ENCODE measurements at regions of chr2 and their contacts with region 1.

Region 1: DNA sequence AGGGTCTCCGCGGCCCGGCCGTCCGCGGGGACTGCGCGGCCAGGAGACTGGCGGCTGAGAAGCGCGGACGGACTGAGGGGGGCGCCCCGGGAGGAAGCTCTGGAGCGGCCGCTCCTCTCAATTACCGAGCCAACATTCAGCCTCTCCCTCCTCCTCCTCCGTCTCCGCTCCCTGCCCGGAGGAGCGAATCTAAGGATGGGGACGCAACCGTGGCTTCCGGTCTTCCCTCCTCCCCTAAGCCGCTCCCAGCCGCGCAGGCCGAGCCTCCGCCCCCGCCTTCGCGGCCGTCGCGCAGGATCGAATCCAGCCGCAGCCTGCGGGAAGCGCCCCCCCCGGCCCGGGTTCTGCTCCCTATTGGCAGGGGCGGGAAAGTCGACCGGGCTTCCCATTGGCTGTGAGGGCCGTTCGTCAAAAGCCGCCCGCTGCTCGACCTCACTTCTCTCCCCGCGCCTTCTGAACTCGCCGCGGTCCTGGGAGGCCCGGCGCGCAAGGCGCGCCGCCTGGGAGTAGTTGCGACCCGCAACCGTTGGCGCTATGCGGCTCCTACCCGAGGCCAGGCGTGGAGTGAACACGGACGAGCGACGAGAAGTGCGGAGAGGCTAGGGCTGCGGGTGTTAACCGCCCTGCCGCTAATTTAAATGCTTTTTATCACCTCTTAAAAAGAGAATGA is at the start of gene HNRNPLL:
- DNase-seq: peak; percentile 97 to 99
- ATAC-seq: peak; percentile 86 to 88
- H3K4me3 ChIP-seq: peak within 1 kb of the TSS; percentile 80 to 93 (median 90)
- H3K27ac ChIP-seq: peak within 1 kb of the TSS; percentile 94 to 98 (median 98)
- H3K4me1 ChIP-seq: peaks cover 34 to 43% of the 10 kb centered on the region in 2 donors
- H3K27me3 ChIP-seq: no peaks in the 10 kb centered on the region
- CTCF ChIP-seq: no peak
- POLR2A ChIP-seq: peak; percentile 98
- total RNA-seq, gene HNRNPLL: 20.0 to 42.9 (median 21.9) TPM

Region 2: DNA sequence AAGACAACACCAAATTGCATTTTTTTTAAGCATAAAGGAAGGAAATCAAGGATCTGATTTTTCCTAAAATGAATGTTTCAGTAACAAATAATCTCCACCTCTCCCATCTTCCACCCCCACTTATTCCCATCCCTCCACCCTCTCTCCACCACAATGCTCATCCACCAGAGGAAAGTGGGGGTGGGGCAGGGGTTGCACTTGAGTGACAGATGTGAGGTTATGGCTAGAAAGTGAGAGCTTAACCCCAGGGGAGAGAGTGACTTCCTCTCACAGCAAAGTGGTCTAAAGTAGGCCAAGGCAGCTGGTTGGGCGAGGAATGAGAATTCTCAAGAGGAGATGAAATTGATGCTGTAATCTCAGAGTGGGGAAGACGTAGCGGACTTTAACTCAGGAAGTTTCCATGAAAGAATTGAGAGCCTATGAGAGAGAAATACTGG is 104.8 kb before region 1 on chr2:
- in situ Hi-C with region 1: no loop called
- intact Hi-C with region 1: loop called (anchors 5 kb)
- DNase-seq: no peak
- ATAC-seq: no peak
- H3K4me3 ChIP-seq: no peak overlapping the region
- H3K27ac ChIP-seq: peak overlapping the region; percentile 78 to 93 (median 86)
- H3K4me1 ChIP-seq: peaks cover 54 to 66% of the 10 kb centered on the region in 2 donors
- H3K27me3 ChIP-seq: no peaks in the 10 kb centered on the region
- CTCF ChIP-seq: no peak
- POLR2A ChIP-seq: no peak

Region 3: GRCh38 chr2:38528008-38528442 is 74.8 kb before region 1 on chr2:
- in situ Hi-C with region 1: no loop called
- intact Hi-C with region 1: loop called (anchors 5 kb)
- DNase-seq: no peak
- ATAC-seq: peak; percentile 12 to 56
- H3K4me3 ChIP-seq: peak overlapping the region; percentile 49 to 60 (median 56)
- H3K27ac ChIP-seq: peak overlapping the region; percentile 72 to 91 (median 80)
- H3K4me1 ChIP-seq: peaks cover 31 to 37% of the 10 kb centered on the region in 2 donors
- H3K27me3 ChIP-seq: no peaks in the 10 kb centered on the region
- CTCF ChIP-seq: no peak
- POLR2A ChIP-seq: no peak

Region 4: DNA sequence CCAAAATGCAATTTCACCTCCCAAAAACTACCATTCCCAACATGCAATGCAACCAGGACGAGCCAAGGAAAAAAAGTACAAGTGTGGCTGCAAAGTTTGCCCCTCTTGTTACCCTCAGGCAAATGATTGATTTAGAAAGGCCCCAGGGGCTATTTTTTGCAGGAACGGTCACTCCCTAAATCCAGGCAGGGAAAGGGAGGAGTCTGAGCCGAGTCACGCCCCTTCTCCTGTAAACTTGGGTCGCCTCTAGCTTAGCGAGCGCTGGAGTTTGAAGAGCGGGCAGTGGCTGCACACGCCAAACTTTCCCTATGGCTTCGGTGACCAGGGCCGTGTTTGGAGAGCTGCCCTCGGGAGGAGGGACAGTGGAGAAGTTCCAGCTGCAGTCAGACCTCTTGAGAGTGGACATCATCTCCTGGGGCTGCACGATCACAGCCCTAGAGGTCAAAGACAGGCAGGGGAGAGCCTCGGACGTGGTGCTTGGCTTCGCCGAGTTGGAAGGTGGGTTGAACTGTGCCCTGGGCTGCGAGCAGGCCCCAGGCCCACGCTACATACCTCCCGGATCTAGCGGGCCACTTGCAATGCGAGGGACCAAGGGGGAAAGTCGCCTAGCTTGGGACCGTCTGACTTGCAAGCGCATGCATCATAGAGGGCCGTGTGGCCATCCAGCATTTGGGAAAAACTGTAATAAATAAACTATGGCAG is 63.1 kb after region 1 on chr2 and contains the start of gene GALM:
- in situ Hi-C with region 1: loop called in 2 of 4 experiments (anchors 10 kb)
- intact Hi-C with region 1: loop called (anchors 2 kb)
- DNase-seq: peak; percentile 79 to 89
- ATAC-seq: peak; percentile 81 to 96
- H3K4me3 ChIP-seq: peak within 1 kb of the TSS; percentile 63 to 76 (median 75)
- H3K27ac ChIP-seq: peak within 1 kb of the TSS; percentile 73 to 81 (median 78)
- H3K4me1 ChIP-seq: peaks cover 13 to 23% of the 10 kb centered on the region in 2 donors
- H3K27me3 ChIP-seq: no peaks in the 10 kb centered on the region
- CTCF ChIP-seq: no peak
- POLR2A ChIP-seq: peak; percentile 38 to 70
- total RNA-seq, gene GALM: 5.3 to 16.9 (median 14.9) TPM

Region 5: DNA sequence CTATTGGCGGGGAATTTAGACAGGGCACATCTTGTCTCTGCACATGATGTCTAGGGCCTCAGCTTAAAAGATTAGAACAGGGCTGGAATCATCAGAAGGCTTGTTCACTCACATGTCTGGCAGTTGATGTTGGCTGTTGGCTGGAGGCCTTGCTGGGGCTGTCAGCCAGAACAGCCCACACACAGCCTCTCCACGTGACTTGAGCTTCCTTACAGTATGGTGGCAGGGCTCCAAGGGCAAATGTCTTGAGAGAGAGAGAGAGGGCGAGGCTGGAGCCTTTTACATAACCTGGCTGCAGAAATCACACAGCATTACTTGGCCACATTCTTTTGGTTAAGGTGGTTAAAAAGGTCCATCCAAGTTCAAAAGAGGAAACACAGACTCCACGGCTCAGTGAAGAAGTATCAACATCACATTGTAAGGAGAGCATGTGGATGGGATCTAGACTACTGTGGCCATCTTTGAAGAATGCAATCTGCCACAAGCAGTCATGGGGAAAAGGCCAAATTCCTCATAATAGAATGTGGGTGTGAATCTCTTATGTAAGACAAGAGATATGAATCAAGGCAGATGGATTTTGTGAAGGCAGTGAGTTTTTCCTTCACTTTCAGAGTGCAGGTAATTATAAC is 117.9 kb after region 1 on chr2:
- in situ Hi-C with region 1: no loop called
- intact Hi-C with region 1: loop called (anchors 5 kb)
- DNase-seq: peak; percentile 79 to 88
- ATAC-seq: peak; percentile 76 to 91
- H3K4me3 ChIP-seq: no peak overlapping the region
- H3K27ac ChIP-seq: peak overlapping the region; percentile 76 to 90 (median 88)
- H3K4me1 ChIP-seq: peaks cover 29 to 32% of the 10 kb centered on the region in 2 donors
- H3K27me3 ChIP-seq: no peaks in the 10 kb centered on the region
- CTCF ChIP-seq: no peak
- POLR2A ChIP-seq: no peak

Region 6: DNA sequence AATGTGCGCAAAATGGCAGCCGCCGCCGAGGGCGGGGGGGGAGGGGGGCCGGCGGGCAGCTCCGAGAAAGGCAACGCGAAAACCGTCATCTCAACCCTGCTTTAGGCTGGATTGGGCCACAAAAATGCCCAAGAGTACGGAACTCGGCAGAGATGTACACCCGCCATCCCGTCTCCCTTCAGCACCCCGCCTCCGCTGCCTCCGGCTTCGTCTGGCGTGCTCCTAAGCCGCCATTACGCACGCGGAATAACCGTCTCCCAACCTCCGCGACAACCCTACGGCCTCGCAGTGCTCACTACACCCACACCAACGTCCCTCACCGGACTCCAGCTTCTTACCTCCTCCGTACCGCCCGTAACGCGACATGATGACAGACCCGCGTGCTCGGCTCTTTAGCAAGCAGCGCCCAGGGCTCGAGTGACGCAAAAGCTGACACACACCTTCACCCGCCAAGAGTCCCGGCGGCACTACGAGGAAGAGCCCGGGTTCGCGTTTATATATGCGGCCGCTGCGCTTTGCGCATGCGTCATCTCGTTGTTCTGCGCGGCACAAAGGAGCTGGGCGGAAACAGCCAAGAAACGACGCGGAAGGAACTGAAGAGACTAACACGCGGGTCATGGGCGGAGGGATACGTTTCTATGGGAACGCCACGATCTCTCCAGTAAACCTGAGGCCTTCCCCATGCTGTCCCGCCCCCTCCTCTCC is 148.2 kb after region 1 on chr2 and contains the start of gene SRSF7:
- in situ Hi-C with region 1: loop called in 1 of 4 experiments (anchors 10 kb)
- intact Hi-C with region 1: loop called (anchors 2 kb)
- DNase-seq: peak; percentile 96 to 97
- ATAC-seq: peak; percentile 94 to 96
- H3K4me3 ChIP-seq: peak within 1 kb of the TSS; percentile 72 to 88 (median 82)
- H3K27ac ChIP-seq: peak within 1 kb of the TSS; percentile 96 to 98 (median 97)
- H3K4me1 ChIP-seq: peaks cover 24 to 26% of the 10 kb centered on the region in 2 donors
- H3K27me3 ChIP-seq: no peaks in the 10 kb centered on the region
- CTCF ChIP-seq: no peak
- POLR2A ChIP-seq: peak; percentile 100
- total RNA-seq, gene SRSF7: 21.5 to 51.4 (median 34.1) TPM

Measured in gastrocnemius medialis (tissue), 4 donors.